GM12878 (cell line): ENCODE measurements at regions of chr17 and their contacts with region 1.

Region 1: DNA sequence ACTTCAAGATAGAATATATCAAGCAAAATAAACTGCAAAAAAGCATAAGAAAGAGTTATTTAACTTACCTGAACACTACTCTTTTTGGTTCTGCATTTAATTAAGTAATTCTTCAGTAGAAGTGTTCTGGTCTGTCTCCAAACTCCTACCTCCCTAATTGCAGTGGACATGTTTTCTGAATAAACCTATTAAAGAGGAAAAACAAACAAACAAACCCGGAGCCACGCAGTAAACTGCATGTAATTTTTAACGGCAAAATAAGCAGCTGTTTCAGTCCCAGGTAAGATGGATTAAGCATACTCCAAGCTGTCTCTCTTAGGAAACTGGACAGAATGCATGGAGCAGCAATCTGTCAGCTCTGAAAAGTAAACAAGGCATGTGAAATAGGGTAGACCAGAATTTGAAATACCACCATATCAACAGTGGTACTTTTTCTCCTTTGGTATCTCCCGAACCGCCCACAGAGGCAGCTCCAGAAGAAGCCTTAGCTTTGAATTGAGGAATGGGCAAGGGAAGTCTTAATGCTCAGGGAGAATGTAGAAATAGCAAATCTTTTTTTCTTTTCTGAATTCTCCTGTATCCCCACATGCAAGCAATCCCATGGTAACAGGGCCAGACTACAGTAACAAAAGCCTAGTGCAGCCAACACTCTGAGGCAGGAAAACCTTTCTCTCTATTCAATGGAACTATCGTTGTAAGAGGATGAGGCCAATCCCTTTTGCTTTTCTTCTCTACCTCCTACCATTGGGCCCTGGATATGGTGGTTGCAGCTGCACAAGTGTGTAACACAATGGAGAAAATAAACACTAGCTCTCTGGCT is 12.5 kb downstream of the ABCA5 start:
- DNase-seq: no peak
- ATAC-seq: no peak
- H3K4me3 ChIP-seq: no peak overlapping the region
- H3K27ac ChIP-seq: no peak overlapping the region
- H3K4me1 ChIP-seq: no peaks in the 10 kb centered on the region
- H3K27me3 ChIP-seq: no peaks in the 10 kb centered on the region
- CTCF ChIP-seq: no peak
- EP300 ChIP-seq: no peak
- POLR2A ChIP-seq: no peak
- RAD21 ChIP-seq: no peak

Region 2: GRCh38 chr17:69327060-69327831 is 12.8 kb after region 1 on chr17 and contains the start of gene ABCA5:
- CTCF ChIA-PET with region 1: interaction called, 8 read pairs
- POLR2A ChIA-PET with region 1: interaction called, 6 read pairs
- RAD21 ChIA-PET with region 1: no interaction called
- SMC1A ChIA-PET with region 1: interaction called, 24 read pairs
- in situ Hi-C with region 1: no loop called
- intact Hi-C with region 1: no loop called
- DNase-seq: peak; percentile 69
- ATAC-seq: peak; percentile 96
- H3K4me3 ChIP-seq: peak within 1 kb of the TSS; percentile 76
- H3K27ac ChIP-seq: peak within 1 kb of the TSS; percentile 85
- H3K4me1 ChIP-seq: no peaks in the 10 kb centered on the region
- H3K27me3 ChIP-seq: no peaks in the 10 kb centered on the region
- CTCF ChIP-seq: no peak
- EP300 ChIP-seq: no peak
- POLR2A ChIP-seq: peak; percentile 98
- RAD21 ChIP-seq: no peak
- polyA plus RNA-seq, gene ABCA5: 11.8 to 31.1 TPM